CD4-positive, alpha-beta T cell (primary cell): ENCODE measurements at regions of chrX and their contacts with region 1.

Region 1: GRCh38 chrX:107686792-107687191 is 58.5 kb downstream of the PRPS1 start:
- DNase-seq: peak in 2 of 14 experiments; percentile 25 to 41
- ATAC-seq: no peak
- H3K4me3 ChIP-seq: no peak overlapping the region
- H3K4me3 Mint-ChIP-seq: no peak overlapping the region
- H3K27ac ChIP-seq: no peak overlapping the region
- H3K27ac Mint-ChIP-seq: no peak overlapping the region
- H3K4me1 ChIP-seq: peaks cover 47% of the 10 kb centered on the region
- H3K4me1 Mint-ChIP-seq: peaks cover 40% of the 10 kb centered on the region
- H3K27me3 ChIP-seq: no peaks in the 10 kb centered on the region
- H3K27me3 Mint-ChIP-seq: no peaks in the 10 kb centered on the region
- CTCF ChIP-seq: no peak

Region 2: GRCh38 chrX:107610667-107611066 is 76.1 kb before region 1 on chrX:
- CTCF ChIA-PET with region 1: no interaction called
- POLR2A ChIA-PET with region 1: no interaction called
- intact Hi-C with region 1: no loop called
- DNase-seq: no peak
- ATAC-seq: no peak
- H3K4me3 ChIP-seq: no peak overlapping the region
- H3K4me3 Mint-ChIP-seq: no peak overlapping the region
- H3K27ac ChIP-seq: no peak overlapping the region
- H3K27ac Mint-ChIP-seq: no peak overlapping the region
- H3K4me1 ChIP-seq: no peaks in the 10 kb centered on the region
- H3K4me1 Mint-ChIP-seq: no peaks in the 10 kb centered on the region
- H3K27me3 ChIP-seq: no peaks in the 10 kb centered on the region
- H3K27me3 Mint-ChIP-seq: no peaks in the 10 kb centered on the region
- CTCF ChIP-seq: no peak

Region 3: GRCh38 chrX:107701493-107702121 is 14.8 kb after region 1 on chrX:
- CTCF ChIA-PET with region 1: interaction called, 3 read pairs
- POLR2A ChIA-PET with region 1: interaction called, 754 read pairs
- intact Hi-C with region 1: loop called in 1 of 2 experiments (anchors 2 kb)
- DNase-seq: peak in 2 of 14 experiments; percentile 29 to 46
- ATAC-seq: no peak
- H3K4me3 ChIP-seq: no peak overlapping the region
- H3K4me3 Mint-ChIP-seq: no peak overlapping the region
- H3K27ac ChIP-seq: no peak overlapping the region
- H3K27ac Mint-ChIP-seq: no peak overlapping the region
- H3K4me1 ChIP-seq: peaks cover 9% of the 10 kb centered on the region
- H3K4me1 Mint-ChIP-seq: peaks cover 21% of the 10 kb centered on the region
- H3K27me3 ChIP-seq: no peaks in the 10 kb centered on the region
- H3K27me3 Mint-ChIP-seq: no peaks in the 10 kb centered on the region
- CTCF ChIP-seq: no peak